Right ventricle myocardium superior (tissue), 1 donor: ENCODE measurements at regions of chr11 and their contacts with region 1.

Region 1: GRCh38 chr11:34002268-34002807 is 49.2 kb upstream of the CAPRIN1 start:
- DNase-seq: no peak
- ATAC-seq: no peak

Region 2: DNA sequence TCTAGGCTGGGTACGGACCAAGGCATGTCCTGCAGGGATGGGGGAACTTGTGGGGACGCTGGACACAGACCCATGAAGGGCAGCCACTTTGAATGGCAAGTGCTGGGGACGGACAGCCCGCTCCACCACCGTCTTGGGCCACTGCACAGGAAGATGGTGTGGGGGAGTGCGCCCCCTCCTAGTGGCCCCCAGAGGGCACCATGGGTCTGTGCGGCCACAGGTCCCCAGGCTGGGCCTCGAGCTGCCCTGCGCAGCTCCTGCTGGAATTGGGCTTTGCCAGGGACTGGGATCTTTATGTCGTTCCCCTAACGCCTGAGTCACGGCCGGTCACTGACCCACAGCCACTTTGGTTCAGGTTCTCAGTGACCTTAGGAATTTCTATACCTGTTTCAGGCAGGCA is 147.4 kb after region 1 on chr11:
- intact Hi-C with region 1: loop called (anchors 10 kb)
- DNase-seq: no peak
- ATAC-seq: no peak